ENCODE measurements at regions of chr14 and their contacts with region 1.

Region 1: DNA sequence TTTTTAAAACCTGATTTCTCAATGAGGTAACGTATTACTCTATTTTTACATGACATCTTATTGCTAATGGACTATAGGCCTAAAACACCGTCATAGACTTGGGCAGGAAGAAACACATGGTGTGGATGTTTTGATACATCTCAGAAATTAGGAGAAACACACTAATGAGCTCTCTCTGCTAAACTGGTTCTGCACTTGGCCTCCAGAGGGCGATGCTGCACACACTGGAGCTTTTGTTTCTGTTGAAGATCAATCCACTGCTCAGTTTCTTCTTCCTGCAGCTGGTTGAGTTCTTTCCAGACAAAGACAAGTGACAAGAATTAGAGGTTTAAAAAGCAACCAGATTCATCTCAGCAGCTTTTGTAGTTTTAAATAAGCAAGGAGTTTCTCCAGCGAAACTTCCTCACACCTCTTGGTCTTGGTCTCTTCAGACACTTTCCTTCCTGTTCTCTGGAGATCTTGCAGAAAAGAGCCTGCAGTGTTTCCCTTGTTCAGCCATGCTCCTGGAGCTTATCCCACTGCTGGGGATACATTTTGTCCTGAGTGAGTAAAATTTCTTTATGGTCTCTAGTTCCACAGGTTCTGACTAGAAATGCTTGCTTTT is 178.5 kb upstream of the OR4E1 start:
- DNase-seq: peak; percentile 87
- ATAC-seq: peak; percentile 73
- H3K4me3 Mint-ChIP-seq: peak overlapping the region; percentile 69
- H3K27ac Mint-ChIP-seq: peak overlapping the region; percentile 81
- H3K4me1 Mint-ChIP-seq: peaks cover 14% of the 10 kb centered on the region
- H3K27me3 Mint-ChIP-seq: peaks cover 8% of the 10 kb centered on the region

Region 2: DNA sequence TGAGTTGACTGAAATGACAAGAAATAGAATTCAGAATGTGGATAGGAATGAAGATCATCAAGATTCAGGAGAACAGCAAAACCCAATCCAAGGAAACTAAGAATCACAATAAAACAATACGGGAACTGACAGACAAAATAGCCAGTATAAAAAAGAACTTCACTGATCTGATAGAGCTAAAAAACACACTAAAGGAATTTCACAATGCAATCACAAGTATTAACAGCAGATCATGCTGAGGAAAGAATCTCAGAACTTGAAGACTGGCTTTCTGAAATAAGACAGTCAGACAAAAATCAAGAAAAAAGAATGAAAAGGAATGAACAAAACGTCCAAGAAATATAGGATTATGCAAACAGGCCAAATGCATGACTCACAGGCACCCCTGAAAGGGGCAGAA is 681.0 kb before region 1 on chr14:
- CTCF ChIA-PET with region 1: no interaction called
- POLR2A ChIA-PET with region 1: no interaction called
- intact Hi-C with region 1: no loop called
- DNase-seq: no peak
- ATAC-seq: no peak
- H3K4me3 Mint-ChIP-seq: no peak overlapping the region
- H3K27ac Mint-ChIP-seq: no peak overlapping the region
- H3K4me1 Mint-ChIP-seq: no peaks in the 10 kb centered on the region
- H3K27me3 Mint-ChIP-seq: peaks cover 6% of the 10 kb centered on the region

Region 3: DNA sequence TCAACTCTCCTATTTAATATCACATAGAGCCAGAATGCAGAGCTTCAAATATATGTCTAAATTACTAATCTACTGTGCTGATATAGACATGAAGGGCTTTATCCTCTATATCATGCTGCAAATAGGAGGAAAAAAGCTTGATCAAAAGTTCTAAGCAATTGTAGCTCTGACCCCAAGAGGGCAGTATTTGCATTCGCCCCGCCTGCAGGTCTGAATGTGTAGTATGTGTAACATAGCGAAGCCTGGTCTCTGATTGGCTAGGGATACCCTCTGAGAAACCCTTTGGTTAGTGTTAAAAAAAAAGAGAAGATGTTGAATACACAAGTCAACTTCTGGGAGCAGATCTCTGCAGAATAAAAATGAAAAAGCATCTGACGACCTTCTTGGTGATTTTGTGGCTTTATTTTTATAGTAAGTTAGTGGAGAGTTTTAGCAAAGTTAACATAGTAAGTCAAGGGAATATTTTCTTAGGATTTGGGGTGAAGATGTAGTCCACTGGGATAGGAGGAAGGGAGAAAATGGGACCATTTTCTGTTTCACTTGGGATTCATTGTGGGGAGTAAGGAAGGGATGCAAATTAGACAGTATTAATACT is 26.9 kb before region 1 on chr14:
- CTCF ChIA-PET with region 1: interaction called, 11 read pairs
- POLR2A ChIA-PET with region 1: no interaction called
- intact Hi-C with region 1: no loop called
- DNase-seq: peak; percentile 73
- ATAC-seq: peak; percentile 99
- H3K4me3 Mint-ChIP-seq: peak overlapping the region; percentile 52
- H3K27ac Mint-ChIP-seq: peak overlapping the region; percentile 3
- H3K4me1 Mint-ChIP-seq: peaks cover 8% of the 10 kb centered on the region
- H3K27me3 Mint-ChIP-seq: peaks cover 22% of the 10 kb centered on the region

Region 4: GRCh38 chr14:21840765-21841164 is 11.4 kb before region 1 on chr14:
- CTCF ChIA-PET with region 1: interaction called, 77 read pairs
- POLR2A ChIA-PET with region 1: interaction called, 3 read pairs
- intact Hi-C with region 1: no loop called
- DNase-seq: no peak
- ATAC-seq: peak; percentile 68
- H3K4me3 Mint-ChIP-seq: peak overlapping the region; percentile 27
- H3K27ac Mint-ChIP-seq: peak overlapping the region; percentile 18
- H3K4me1 Mint-ChIP-seq: peaks cover 7% of the 10 kb centered on the region
- H3K27me3 Mint-ChIP-seq: peaks cover 5% of the 10 kb centered on the region

Region 5: DNA sequence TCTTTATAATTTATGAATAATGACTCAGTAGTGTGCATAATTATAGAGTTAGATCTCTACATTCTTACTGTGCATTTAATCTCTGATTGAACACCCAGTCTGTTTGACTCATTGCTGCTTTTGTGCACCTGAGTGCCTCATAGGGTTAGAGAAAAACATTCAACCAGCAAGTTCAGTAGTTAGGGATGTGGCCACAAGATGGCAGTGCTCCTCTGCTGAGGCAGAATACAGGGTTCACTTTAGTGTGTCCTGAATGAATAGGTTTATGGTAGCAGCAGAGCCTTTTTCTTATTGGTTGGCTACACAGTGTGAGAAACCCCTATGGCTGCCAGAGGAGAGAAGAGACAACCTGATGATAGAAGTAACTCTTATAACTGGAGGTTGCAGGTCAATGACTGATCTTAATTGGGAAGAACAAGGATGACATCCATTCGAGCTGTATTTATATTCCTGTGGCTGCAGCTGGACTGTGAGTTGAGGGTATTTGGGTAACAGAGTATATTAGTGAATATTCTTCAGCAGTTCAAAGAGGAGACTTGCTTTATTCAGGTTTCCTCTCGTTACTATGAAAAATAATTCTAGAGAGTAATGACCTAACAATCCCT is 16.4 kb after region 1 on chr14:
- CTCF ChIA-PET with region 1: interaction called, 33 read pairs
- POLR2A ChIA-PET with region 1: interaction called, 3 read pairs
- intact Hi-C with region 1: no loop called
- DNase-seq: peak; percentile 90
- ATAC-seq: peak; percentile 92
- H3K4me3 Mint-ChIP-seq: peak overlapping the region; percentile 65
- H3K27ac Mint-ChIP-seq: peak overlapping the region; percentile 65
- H3K4me1 Mint-ChIP-seq: peaks cover 34% of the 10 kb centered on the region
- H3K27me3 Mint-ChIP-seq: no peaks in the 10 kb centered on the region

Region 6: DNA sequence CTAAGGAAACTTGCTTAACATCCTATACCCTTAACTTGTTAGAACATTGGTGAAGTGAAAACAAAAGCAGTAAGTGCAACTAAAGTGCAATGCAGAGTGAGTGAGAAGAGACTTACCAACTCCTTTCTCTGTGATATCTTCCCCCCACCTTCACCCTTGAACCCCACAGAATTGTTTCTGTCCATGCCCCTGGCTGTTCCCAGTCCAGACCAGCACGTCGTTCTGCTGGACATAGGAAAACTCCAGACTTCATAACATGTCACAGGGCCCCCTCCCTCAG is 644.9 kb after region 1 on chr14:
- CTCF ChIA-PET with region 1: no interaction called
- POLR2A ChIA-PET with region 1: no interaction called
- intact Hi-C with region 1: loop called in 1 of 2 experiments (anchors 5 kb)
- DNase-seq: no peak
- ATAC-seq: no peak
- H3K4me3 Mint-ChIP-seq: peak overlapping the region; percentile 84
- H3K27ac Mint-ChIP-seq: peak overlapping the region; percentile 99
- H3K4me1 Mint-ChIP-seq: peaks cover 8% of the 10 kb centered on the region
- H3K27me3 Mint-ChIP-seq: no peaks in the 10 kb centered on the region

Region 7: DNA sequence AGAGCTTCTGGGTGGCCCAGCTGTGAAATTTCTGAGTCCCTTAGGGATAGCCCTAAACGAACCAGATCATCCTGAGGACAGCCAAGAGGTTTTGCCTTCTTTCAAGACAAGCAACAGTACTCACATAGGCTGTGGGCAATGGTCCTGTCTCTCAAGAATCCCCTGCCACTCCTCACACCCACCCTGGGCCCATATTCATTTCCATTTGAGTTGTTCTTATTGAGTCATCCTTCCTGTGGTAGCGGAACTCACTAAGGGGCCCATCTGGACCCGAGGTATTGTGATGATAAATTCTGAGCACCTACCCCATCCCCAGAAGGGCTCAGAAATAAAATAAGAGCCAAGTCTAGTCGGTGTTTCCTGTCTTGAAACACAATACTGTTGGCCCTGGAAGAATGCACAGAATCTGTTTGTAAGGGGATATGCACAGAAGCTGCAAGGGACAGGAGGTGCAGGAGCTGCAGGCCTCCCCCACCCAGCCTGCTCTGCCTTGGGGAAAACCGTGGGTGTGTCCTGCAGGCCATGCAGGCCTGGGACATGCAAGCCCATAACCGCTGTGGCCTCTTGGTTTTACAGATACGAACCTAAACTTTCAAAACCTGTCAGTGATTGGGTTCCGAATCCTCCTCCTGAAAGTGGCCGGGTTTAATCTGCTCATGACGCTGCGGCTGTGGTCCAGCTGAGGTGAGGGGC is 698.0 kb after region 1 on chr14:
- CTCF ChIA-PET with region 1: interaction called, 11 read pairs
- POLR2A ChIA-PET with region 1: interaction called, 4 read pairs
- intact Hi-C with region 1: no loop called
- DNase-seq: peak; percentile 84
- ATAC-seq: peak; percentile 63
- H3K4me3 Mint-ChIP-seq: peak overlapping the region; percentile 71
- H3K27ac Mint-ChIP-seq: peak overlapping the region; percentile 99
- H3K4me1 Mint-ChIP-seq: peaks cover 94% of the 10 kb centered on the region
- H3K27me3 Mint-ChIP-seq: no peaks in the 10 kb centered on the region